ENCODE measurements at regions of chr12 and their contacts with region 1.

Region 1: DNA sequence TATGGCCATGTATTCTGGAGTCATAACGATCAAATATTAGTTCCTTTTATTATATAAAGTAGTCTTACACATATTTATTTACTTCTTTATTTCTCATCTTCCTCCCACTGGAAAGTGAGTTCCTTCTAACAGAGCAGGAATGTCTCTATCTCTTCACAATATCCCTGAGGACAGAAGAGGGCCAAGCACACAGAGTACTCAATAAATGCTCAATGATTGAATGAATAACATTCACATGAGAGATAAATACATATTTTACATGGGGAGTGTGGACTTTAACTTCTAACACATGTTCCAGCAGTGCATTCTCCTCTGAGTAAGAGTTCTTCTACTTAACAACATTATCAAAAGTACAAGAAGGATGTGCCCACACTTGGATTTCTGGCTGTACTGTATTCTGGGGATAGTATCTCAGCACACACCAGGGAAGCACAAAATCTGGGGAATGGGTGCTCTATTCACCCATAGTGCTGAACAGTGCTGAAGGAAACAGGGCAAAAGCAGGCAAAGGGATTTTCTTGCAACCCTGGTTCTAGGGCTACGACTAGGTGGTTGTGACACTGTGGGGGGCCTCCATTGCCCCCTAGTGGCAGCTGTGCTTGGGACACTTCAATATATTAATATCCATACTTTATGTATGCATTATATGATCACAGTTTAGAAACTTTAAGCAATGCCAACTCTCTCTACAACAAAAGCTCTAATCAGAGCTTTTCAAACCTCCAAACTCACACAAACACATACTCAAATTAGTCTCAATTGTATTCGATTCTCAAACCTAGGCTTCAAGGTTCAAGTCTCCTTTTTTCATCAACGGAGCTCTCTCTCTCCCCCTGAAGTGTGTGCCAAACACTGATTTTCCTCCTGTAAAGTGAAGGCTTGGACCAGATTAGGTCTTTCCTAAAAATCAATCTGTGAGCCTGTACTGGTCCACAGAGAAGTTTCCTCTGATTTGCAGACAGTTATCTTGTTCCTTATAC is 115.5 kb downstream of the SLC2A13 start:
- DNase-seq: peak; percentile 33 to 50 (median 45)
- H3K4me3 ChIP-seq: no peak overlapping the region
- H3K4me3 Mint-ChIP-seq: no peak overlapping the region
- H3K27ac ChIP-seq: no peak overlapping the region
- H3K27ac Mint-ChIP-seq: peak overlapping the region in 2 of 7 donors; percentile 25 to 38
- H3K4me1 ChIP-seq: no peaks in the 10 kb centered on the region
- H3K4me1 Mint-ChIP-seq: peaks cover 3 to 8% (median 7%) of the 10 kb centered on the region in 4 donors
- H3K27me3 ChIP-seq: no peaks in the 10 kb centered on the region
- H3K27me3 Mint-ChIP-seq: no peaks in the 10 kb centered on the region

Region 2: DNA sequence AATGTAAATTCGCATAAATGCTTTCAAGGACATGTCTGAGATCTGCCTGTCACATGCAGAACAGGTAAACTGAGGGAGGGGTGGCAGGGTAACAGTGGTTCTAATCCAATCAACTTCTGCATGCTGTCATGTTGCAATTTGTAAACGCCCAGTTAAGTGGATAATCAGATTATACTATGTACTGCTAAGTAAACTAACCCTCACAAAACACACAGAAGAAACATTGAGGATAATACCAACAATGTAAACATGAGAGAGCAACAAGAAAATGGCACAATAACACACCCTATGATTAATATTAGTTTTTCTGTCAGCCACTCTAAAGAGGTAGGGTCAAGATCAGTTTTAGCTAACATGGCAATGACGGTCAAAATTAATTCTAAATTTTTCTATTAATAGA is 671.2 kb before region 1 on chr12:
- CTCF ChIA-PET with region 1: interaction called, 15 read pairs
- POLR2A ChIA-PET with region 1: no interaction called
- intact Hi-C with region 1: no loop called
- DNase-seq: peak in 1 of 5 donors; percentile 14
- H3K4me3 ChIP-seq: no peak overlapping the region
- H3K4me3 Mint-ChIP-seq: no peak overlapping the region
- H3K27ac ChIP-seq: no peak overlapping the region
- H3K27ac Mint-ChIP-seq: peak overlapping the region in 1 of 7 donors; percentile 47
- H3K4me1 ChIP-seq: no peaks in the 10 kb centered on the region
- H3K4me1 Mint-ChIP-seq: peaks cover 0 to 2% (median 0%) of the 10 kb centered on the region in 4 donors
- H3K27me3 ChIP-seq: no peaks in the 10 kb centered on the region
- H3K27me3 Mint-ChIP-seq: no peaks in the 10 kb centered on the region

Region 3: GRCh38 chr12:39365364-39366001 is 624.9 kb before region 1 on chr12:
- CTCF ChIA-PET with region 1: interaction called, 9 read pairs
- POLR2A ChIA-PET with region 1: no interaction called
- intact Hi-C with region 1: loop called (anchors 1 kb)
- DNase-seq: no peak
- H3K4me3 ChIP-seq: no peak overlapping the region
- H3K4me3 Mint-ChIP-seq: no peak overlapping the region
- H3K27ac ChIP-seq: no peak overlapping the region
- H3K27ac Mint-ChIP-seq: no peak overlapping the region
- H3K4me1 ChIP-seq: no peaks in the 10 kb centered on the region
- H3K4me1 Mint-ChIP-seq: peaks cover 0 to 1% (median 0%) of the 10 kb centered on the region in 4 donors
- H3K27me3 ChIP-seq: no peaks in the 10 kb centered on the region
- H3K27me3 Mint-ChIP-seq: no peaks in the 10 kb centered on the region

Region 4: DNA sequence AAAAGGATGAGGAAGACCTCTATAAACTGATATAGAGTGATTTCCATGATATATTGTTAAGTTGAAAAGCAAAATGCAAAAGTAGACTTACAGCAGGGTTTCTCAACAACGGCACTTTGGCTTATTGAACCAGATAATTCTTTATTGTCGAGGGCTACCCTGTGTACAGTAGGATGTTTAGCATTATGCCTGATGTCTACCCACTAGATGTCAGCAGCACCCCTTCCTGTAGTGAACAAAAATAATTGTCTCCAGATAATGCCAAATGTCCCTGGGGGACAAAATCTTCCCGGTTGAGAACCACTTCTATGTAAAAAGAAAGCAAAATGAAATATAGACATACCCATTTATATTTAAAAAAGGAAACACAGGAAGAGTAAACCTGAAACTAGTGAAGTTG is 403.2 kb before region 1 on chr12:
- CTCF ChIA-PET with region 1: interaction called, 13 read pairs
- POLR2A ChIA-PET with region 1: no interaction called
- intact Hi-C with region 1: no loop called
- DNase-seq: peak; percentile 36 to 50 (median 40)
- H3K4me3 ChIP-seq: no peak overlapping the region
- H3K4me3 Mint-ChIP-seq: no peak overlapping the region
- H3K27ac ChIP-seq: no peak overlapping the region
- H3K27ac Mint-ChIP-seq: no peak overlapping the region
- H3K4me1 ChIP-seq: no peaks in the 10 kb centered on the region
- H3K4me1 Mint-ChIP-seq: peaks cover 3 to 7% (median 5%) of the 10 kb centered on the region in 4 donors
- H3K27me3 ChIP-seq: no peaks in the 10 kb centered on the region
- H3K27me3 Mint-ChIP-seq: no peaks in the 10 kb centered on the region

Region 5: GRCh38 chr12:39764944-39765560 is 225.4 kb before region 1 on chr12:
- CTCF ChIA-PET with region 1: no interaction called
- POLR2A ChIA-PET with region 1: no interaction called
- intact Hi-C with region 1: loop called (anchors 1 kb)
- DNase-seq: peak in 4 of 5 donors; percentile 8 to 11 (median 10)
- H3K4me3 ChIP-seq: no peak overlapping the region
- H3K4me3 Mint-ChIP-seq: no peak overlapping the region
- H3K27ac ChIP-seq: no peak overlapping the region
- H3K27ac Mint-ChIP-seq: no peak overlapping the region
- H3K4me1 ChIP-seq: no peaks in the 10 kb centered on the region
- H3K4me1 Mint-ChIP-seq: no peaks in the 10 kb centered on the region
- H3K27me3 ChIP-seq: no peaks in the 10 kb centered on the region
- H3K27me3 Mint-ChIP-seq: peaks cover 0 to 4% of the 10 kb centered on the region in 2 donors

Region 6: GRCh38 chr12:40010899-40011774 is 20.7 kb after region 1 on chr12:
- CTCF ChIA-PET with region 1: interaction called, 18 read pairs
- POLR2A ChIA-PET with region 1: no interaction called
- intact Hi-C with region 1: no loop called
- DNase-seq: peak; percentile 61 to 67 (median 64)
- H3K4me3 ChIP-seq: peak overlapping the region in 1 of 2 donors; percentile 30
- H3K4me3 Mint-ChIP-seq: peak overlapping the region; percentile 44 to 81 (median 76)
- H3K27ac ChIP-seq: no peak overlapping the region
- H3K27ac Mint-ChIP-seq: peak overlapping the region in 2 of 7 donors; percentile 23 to 26
- H3K4me1 ChIP-seq: peaks cover 6% of the 10 kb centered on the region
- H3K4me1 Mint-ChIP-seq: peaks cover 10 to 14% (median 10%) of the 10 kb centered on the region in 4 donors
- H3K27me3 ChIP-seq: no peaks in the 10 kb centered on the region
- H3K27me3 Mint-ChIP-seq: no peaks in the 10 kb centered on the region